Motor neuron (in vitro differentiated cells): ENCODE measurements at regions of chr1 and their contacts with region 1.

Region 1: GRCh38 chr1:116498789-116499628 is 71.8 kb downstream of the CD58 start:
- ATAC-seq: peak; percentile 66 to 97 (median 94)
- H3K4me3 ChIP-seq: no peak overlapping the region
- H3K27ac ChIP-seq: no peak overlapping the region
- H3K4me1 ChIP-seq: peaks cover 6 to 12% of the 10 kb centered on the region in 2 donors

Region 2: DNA sequence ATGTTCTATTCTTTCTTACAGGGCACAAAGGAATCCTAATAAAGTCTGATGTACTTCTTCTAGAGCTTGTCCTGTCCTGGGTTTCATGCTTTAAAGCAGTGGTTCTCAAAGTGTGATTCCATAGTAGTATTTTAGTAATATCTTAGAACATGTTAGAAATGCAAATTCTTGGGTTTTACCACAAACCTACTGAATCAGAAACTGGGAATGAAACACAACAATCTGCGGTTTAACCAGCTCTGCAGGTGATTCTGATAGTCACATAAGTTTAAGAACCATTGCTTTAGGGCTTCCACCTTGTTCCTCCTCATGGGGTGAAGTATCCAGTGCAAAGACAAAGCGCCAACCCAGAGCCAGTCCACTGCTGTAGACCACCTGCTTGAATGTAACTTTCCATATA is 1202.0 kb before region 1 on chr1:
- in situ Hi-C with region 1: no loop called
- ATAC-seq: no peak
- H3K4me3 ChIP-seq: no peak overlapping the region
- H3K27ac ChIP-seq: no peak overlapping the region
- H3K4me1 ChIP-seq: peaks cover 0 to 23% of the 10 kb centered on the region in 2 donors

Region 3: DNA sequence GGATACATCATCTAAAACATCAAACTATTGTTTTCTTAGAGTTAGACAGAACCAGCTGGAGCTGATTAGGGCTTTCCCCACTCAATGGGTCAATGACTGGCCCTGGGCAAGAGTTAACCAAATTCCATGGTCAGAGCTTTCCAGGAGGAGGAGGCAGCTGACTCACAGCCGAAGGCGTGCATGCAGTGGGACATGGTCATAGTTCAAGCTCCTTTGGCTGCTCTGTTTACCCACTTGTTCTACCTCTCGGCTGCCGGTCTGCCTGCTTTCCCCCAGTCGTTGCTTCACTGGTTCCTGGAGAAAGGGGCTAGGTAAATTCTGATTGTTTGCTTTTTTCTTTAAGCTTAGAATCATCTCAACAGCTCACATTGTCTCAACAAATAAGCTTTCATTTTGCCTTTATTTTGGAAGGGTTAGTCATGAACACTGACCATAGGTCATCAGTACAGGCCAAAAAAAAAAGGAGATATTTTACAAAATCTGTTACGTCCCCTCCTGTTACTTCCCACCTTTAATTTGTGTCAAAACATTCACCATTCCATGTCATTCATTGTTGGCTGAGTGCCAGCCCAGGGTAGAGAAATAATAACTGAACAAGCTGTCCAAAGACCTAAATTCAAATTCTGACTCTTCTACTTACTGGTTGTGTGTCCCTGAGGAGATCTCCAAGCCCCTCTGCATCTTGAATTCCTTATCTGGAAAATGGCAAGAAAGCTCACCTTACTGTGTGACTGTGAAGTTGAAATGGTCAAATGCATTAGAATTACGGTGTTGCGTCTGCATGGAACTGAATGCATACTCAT is 375.9 kb before region 1 on chr1:
- in situ Hi-C with region 1: loop called in 2 of 9 experiments (anchors 10 to 25 kb)
- ATAC-seq: peak in 3 of 8 experiments; percentile 58 to 92 (median 87)
- H3K4me3 ChIP-seq: no peak overlapping the region
- H3K27ac ChIP-seq: no peak overlapping the region
- H3K4me1 ChIP-seq: no peaks in the 10 kb centered on the region

Region 4: GRCh38 chr1:116133696-116134650 is 365.0 kb before region 1 on chr1:
- in situ Hi-C with region 1: loop called in 4 of 9 experiments (anchors 10 to 25 kb)
- ATAC-seq: no peak
- H3K4me3 ChIP-seq: no peak overlapping the region
- H3K27ac ChIP-seq: no peak overlapping the region
- H3K4me1 ChIP-seq: no peaks in the 10 kb centered on the region

Region 5: GRCh38 chr1:116218990-116219321 is 280.1 kb before region 1 on chr1:
- in situ Hi-C with region 1: no loop called
- ATAC-seq: no peak
- H3K4me3 ChIP-seq: no peak overlapping the region
- H3K27ac ChIP-seq: no peak overlapping the region
- H3K4me1 ChIP-seq: no peaks in the 10 kb centered on the region

Region 6: GRCh38 chr1:116574581-116575291 is 75.7 kb after region 1 on chr1:
- in situ Hi-C with region 1: no loop called
- ATAC-seq: no peak
- H3K4me3 ChIP-seq: no peak overlapping the region
- H3K27ac ChIP-seq: no peak overlapping the region
- H3K4me1 ChIP-seq: peaks cover 19 to 21% of the 10 kb centered on the region in 2 donors

Region 7: GRCh38 chr1:117110774-117111173 is 611.8 kb after region 1 on chr1:
- in situ Hi-C with region 1: no loop called
- ATAC-seq: no peak
- H3K4me3 ChIP-seq: no peak overlapping the region
- H3K27ac ChIP-seq: no peak overlapping the region
- H3K4me1 ChIP-seq: peaks cover 19 to 26% of the 10 kb centered on the region in 2 donors